ENCODE measurements at regions of chr19 and their contacts with region 1.

Region 1: DNA sequence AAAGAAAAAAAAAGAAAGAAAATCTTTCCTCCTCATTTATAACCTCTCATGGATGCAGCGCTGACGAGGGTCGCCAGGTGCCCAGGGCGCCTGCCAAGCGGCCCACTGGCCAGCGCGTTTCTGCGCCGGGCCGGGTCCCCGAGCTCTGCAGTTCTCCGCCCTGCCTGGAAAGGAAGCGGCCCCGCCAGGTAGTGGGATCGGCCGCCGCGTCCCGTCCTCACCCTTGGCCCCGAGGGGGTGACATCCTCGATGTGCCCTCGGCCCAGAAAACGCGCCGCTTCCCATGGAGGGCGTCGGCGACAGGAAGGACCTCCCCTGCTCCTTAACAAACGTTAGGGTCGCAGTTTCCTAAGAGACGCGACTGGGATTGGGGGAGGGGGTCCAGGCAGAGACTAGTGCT is 56.9 kb downstream of the ZNF726 start:
- DNase-seq: no peak
- ATAC-seq: no peak
- H3K4me3 ChIP-seq: no peak overlapping the region
- H3K27ac ChIP-seq: no peak overlapping the region
- H3K4me1 ChIP-seq: no peaks in the 10 kb centered on the region
- H3K27me3 ChIP-seq: no peaks in the 10 kb centered on the region
- CTCF ChIP-seq: no peak
- EP300 ChIP-seq: no peak
- POLR2A ChIP-seq: no peak
- RAD21 ChIP-seq: no peak

Region 2: GRCh38 chr19:23470873-23471545 is 500.6 kb before region 1 on chr19:
- CTCF ChIA-PET with region 1: no interaction called
- POLR2A ChIA-PET with region 1: no interaction called
- RAD21 ChIA-PET with region 1: no interaction called
- SMC1A ChIA-PET with region 1: no interaction called
- in situ Hi-C with region 1: loop called (anchors 5 kb)
- intact Hi-C with region 1: no loop called
- DNase-seq: no peak
- ATAC-seq: no peak
- H3K4me3 ChIP-seq: no peak overlapping the region
- H3K27ac ChIP-seq: no peak overlapping the region
- H3K4me1 ChIP-seq: no peaks in the 10 kb centered on the region
- H3K27me3 ChIP-seq: no peaks in the 10 kb centered on the region
- CTCF ChIP-seq: no peak
- EP300 ChIP-seq: no peak
- POLR2A ChIP-seq: no peak
- RAD21 ChIP-seq: no peak

Region 3: GRCh38 chr19:23872282-23872919 is 99.2 kb before region 1 on chr19:
- CTCF ChIA-PET with region 1: no interaction called
- POLR2A ChIA-PET with region 1: no interaction called
- RAD21 ChIA-PET with region 1: no interaction called
- SMC1A ChIA-PET with region 1: no interaction called
- in situ Hi-C with region 1: loop called (anchors 5 kb)
- intact Hi-C with region 1: no loop called
- DNase-seq: no peak
- ATAC-seq: no peak
- H3K4me3 ChIP-seq: no peak overlapping the region
- H3K27ac ChIP-seq: no peak overlapping the region
- H3K4me1 ChIP-seq: no peaks in the 10 kb centered on the region
- H3K27me3 ChIP-seq: no peaks in the 10 kb centered on the region
- CTCF ChIP-seq: no peak
- EP300 ChIP-seq: no peak
- POLR2A ChIP-seq: no peak
- RAD21 ChIP-seq: no peak

Region 4: GRCh38 chr19:23983357-23983756 is 11.8 kb after region 1 on chr19:
- CTCF ChIA-PET with region 1: no interaction called
- POLR2A ChIA-PET with region 1: no interaction called
- RAD21 ChIA-PET with region 1: no interaction called
- SMC1A ChIA-PET with region 1: no interaction called
- in situ Hi-C with region 1: no loop called
- intact Hi-C with region 1: no loop called
- DNase-seq: no peak
- ATAC-seq: no peak
- H3K4me3 ChIP-seq: no peak overlapping the region
- H3K27ac ChIP-seq: no peak overlapping the region
- H3K4me1 ChIP-seq: no peaks in the 10 kb centered on the region
- H3K27me3 ChIP-seq: no peaks in the 10 kb centered on the region
- CTCF ChIP-seq: no peak
- EP300 ChIP-seq: no peak
- POLR2A ChIP-seq: no peak
- RAD21 ChIP-seq: no peak